K562 (cell line): ENCODE measurements at regions of chr22 and their contacts with region 1.

Region 1: DNA sequence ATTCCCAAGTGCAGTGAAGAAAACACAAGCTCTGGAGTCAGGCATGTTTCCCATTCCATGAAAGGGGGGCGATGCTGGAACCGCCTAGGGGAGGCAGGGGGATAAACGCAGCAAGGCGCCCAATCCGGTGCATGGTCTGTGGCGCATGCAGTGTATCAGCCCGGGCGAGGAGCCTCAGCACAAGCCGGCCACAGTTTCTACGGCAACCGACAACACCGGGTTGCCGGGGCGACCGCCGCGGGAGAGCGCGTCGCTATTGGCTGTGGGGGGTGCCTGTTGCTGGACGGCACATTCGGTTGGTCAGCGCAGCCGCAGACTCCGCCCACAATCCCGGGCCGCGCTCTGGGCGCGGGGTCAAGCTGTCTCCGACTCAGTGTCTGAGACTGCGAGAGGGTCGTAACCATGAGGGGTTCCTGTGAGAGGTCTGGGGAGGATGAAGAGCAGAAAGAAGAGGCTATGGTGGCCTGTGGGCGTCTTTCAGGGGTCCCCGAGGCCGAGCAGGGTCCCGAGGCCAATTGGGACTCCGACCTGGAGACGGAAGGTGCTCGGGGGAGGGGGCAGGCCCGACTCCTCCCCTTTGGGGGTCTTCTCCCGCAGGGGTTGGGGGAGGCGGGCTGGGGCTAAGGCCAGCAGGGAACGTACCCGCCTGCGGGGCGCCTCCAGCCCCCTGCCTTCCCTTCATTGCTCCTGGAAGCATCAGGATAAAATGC is at the start of gene LRRC74B:
- DNase-seq: peak; percentile 99 to 100 (median 100)
- ATAC-seq: peak; percentile 99
- H3K4me3 ChIP-seq: peak within 1 kb of the TSS; percentile 5; the same call in 1 of the 2 replicates
- H3K27ac ChIP-seq: no peak within 1 kb of the TSS
- H3K4me1 ChIP-seq: peaks cover 19 to 33% of the 10 kb centered on the region in 2 experiments
- H3K27me3 ChIP-seq: peaks cover 25 to 59% of the 10 kb centered on the region in 2 experiments; a peak in 4 of 5 replicates
- CTCF ChIP-seq: no peak
- EP300 ChIP-seq: no peak
- POLR2A ChIP-seq: no peak
- RAD21 ChIP-seq: no peak; a peak in 1 of 4 replicates
- polyA plus RNA-seq, gene LRRC74B: not detected

Region 2: DNA sequence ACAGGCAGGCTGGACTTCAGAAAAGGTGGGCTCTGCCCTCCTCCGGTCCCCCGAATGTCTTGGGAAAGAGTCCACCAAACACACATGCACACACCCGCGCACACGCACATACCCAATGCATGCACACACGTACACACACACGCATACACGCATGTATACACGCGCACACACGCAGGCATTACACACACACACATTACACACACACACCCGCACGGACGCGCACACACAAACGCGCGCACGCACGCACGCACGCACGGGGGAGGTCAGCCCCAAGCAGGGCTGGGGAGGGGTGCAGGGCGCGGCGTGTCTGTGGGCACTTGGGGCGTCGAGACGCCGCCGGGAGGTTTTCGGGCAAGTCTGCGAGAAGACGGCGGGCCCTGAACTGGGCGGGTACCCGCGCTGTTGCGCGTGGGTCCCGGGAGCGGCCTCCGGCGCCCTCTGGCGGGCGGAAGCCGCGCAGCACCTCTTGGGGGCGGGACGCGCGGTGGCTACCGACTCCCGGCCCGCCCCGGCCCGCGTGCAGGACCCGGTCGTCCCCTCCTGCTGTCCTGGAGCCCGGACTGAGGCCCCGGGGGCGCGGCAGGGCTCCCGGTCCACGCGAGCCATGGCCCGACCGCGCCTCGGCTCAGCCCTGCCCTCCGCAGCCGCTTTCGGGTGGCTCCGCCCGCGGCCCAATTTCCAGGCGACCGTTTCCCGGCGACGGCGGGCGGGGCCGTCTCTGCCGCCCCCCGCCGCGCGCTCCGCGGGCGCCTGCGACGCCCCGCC is 1327.9 kb before region 1 on chr22:
- CTCF ChIA-PET with region 1: no interaction called
- POLR2A ChIA-PET with region 1: no interaction called
- in situ Hi-C with region 1: no loop called
- intact Hi-C with region 1: no loop called
- DNase-seq: peak; percentile 98 to 99 (median 98)
- ATAC-seq: peak; percentile 69
- H3K4me3 ChIP-seq: peak overlapping the region; percentile 51
- H3K27ac ChIP-seq: peak overlapping the region; percentile 92
- H3K4me1 ChIP-seq: peaks cover 62 to 97% of the 10 kb centered on the region in 2 experiments
- H3K27me3 ChIP-seq: peaks cover 0 to 10% of the 10 kb centered on the region in 2 experiments; a peak in 2 of 5 replicates
- CTCF ChIP-seq: peak; percentile 98 to 100 (median 98)
- EP300 ChIP-seq: peak; percentile 47; the same call in 1 of the 2 replicates
- POLR2A ChIP-seq: peak; percentile 2; the same call in 1 of the 2 replicates
- RAD21 ChIP-seq: peak in 1 of 2 experiments; percentile 100; a peak in 2 of 4 replicates

Region 3: DNA sequence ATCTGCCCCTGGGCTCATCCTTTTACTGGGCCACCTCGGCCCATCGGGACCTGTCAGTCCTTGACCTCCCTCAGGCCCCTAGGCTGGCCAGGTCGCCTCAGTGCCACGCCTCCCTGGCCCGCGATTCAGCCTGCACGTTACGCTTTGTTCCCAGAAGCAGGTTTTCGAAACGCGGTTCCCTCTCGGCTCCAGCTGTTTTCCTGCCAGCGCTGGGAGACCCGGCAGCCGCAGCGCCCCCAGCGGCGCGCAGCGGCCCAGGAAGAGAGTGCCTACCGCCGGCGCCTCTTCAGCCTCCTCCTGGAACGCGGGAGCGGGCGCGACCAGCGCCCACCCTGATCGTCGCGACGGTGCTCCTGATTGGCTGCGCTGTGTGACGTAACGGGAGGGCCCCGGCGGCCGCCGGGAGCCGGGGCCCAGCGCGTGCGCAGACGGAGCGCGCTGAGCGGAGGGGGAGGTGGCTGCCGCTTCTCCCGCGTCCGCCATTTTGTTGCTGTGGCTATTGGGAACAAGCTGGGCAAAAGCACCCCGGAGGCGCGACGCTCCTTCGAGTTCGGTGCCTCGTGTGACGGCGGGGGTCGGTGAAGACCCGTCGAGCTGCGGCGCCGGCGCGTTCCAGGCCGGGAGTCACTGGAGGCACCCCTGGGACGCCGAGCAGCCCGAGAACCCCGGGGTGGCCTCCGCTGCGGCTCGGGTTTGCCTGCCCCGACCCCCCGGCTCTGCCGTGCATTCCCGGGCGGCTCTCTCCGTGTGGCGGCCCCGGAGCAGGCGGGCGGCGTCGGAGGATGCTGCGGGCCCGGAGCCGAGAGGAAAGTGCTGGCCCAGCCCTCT is 128.5 kb before region 1 on chr22 and contains the start of gene CRKL:
- CTCF ChIA-PET with region 1: no interaction called
- POLR2A ChIA-PET with region 1: no interaction called
- in situ Hi-C with region 1: no loop called
- intact Hi-C with region 1: no loop called
- DNase-seq: peak; percentile 100
- ATAC-seq: peak; percentile 93
- H3K4me3 ChIP-seq: peak within 1 kb of the TSS; percentile 67
- H3K27ac ChIP-seq: peak within 1 kb of the TSS; percentile 89
- H3K4me1 ChIP-seq: peaks cover 20 to 41% of the 10 kb centered on the region in 2 experiments
- H3K27me3 ChIP-seq: no peaks in the 10 kb centered on the region
- CTCF ChIP-seq: peak; percentile 99 to 100 (median 100)
- EP300 ChIP-seq: peak; percentile 88
- POLR2A ChIP-seq: no peak
- RAD21 ChIP-seq: no peak
- polyA plus RNA-seq, gene CRKL: 100 to 105 TPM

Region 4: DNA sequence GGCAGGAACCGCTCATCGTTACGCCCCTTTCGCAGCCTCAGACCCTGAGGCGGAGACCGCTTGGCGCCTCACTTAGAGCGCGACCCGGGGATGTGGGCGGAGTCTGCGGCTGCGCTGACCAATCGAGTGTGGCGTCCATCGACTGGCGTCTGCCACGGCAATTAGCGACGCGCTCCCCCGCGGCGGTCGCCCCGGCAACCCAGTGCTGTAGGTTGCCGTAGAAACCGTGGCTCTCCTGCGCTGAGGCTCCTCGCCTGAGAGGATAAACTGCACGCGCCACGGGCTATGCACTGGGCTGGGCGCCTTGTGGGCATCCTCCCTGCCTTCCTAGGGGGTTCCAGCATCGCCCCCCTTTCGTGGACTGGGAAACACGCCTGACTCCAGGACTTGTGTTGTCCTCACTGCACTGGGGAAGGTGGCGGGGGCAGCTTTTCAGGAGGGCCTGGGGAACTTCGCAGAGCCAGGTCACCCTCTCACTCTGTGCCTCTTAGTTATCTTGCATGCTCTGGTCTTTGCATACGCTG is 31.5 kb before region 1 on chr22:
- CTCF ChIA-PET with region 1: no interaction called
- POLR2A ChIA-PET with region 1: interaction called, 7 read pairs
- in situ Hi-C with region 1: no loop called
- intact Hi-C with region 1: loop called (anchors 5 kb)
- DNase-seq: peak; percentile 100
- ATAC-seq: peak; percentile 91
- H3K4me3 ChIP-seq: peak overlapping the region; percentile 44
- H3K27ac ChIP-seq: peak overlapping the region; percentile 67
- H3K4me1 ChIP-seq: peaks cover 26 to 46% of the 10 kb centered on the region in 2 experiments
- H3K27me3 ChIP-seq: no peaks in the 10 kb centered on the region; a peak in 1 of 5 replicates
- CTCF ChIP-seq: no peak; a peak in 1 of 6 replicates
- EP300 ChIP-seq: peak; percentile 75
- POLR2A ChIP-seq: no peak
- RAD21 ChIP-seq: no peak

Region 5: GRCh38 chr22:21020802-21021429 is 24.8 kb before region 1 on chr22:
- CTCF ChIA-PET with region 1: interaction called, 6 read pairs
- POLR2A ChIA-PET with region 1: interaction called, 120 read pairs
- in situ Hi-C with region 1: no loop called
- intact Hi-C with region 1: no loop called
- DNase-seq: peak; percentile 85 to 98 (median 96)
- ATAC-seq: peak; percentile 88
- H3K4me3 ChIP-seq: no peak overlapping the region
- H3K27ac ChIP-seq: no peak overlapping the region
- H3K4me1 ChIP-seq: peaks cover 7 to 31% of the 10 kb centered on the region in 2 experiments
- H3K27me3 ChIP-seq: peaks cover 3 to 16% of the 10 kb centered on the region in 2 experiments; a peak in 4 of 5 replicates
- CTCF ChIP-seq: peak; percentile 94 to 97 (median 97)
- EP300 ChIP-seq: no peak
- POLR2A ChIP-seq: no peak
- RAD21 ChIP-seq: peak in 1 of 2 experiments; percentile 93; a peak in 3 of 4 replicates

Region 6: GRCh38 chr22:21031971-21032867 is 13.5 kb before region 1 on chr22 and contains the start of gene SLC7A4:
- CTCF ChIA-PET with region 1: no interaction called
- POLR2A ChIA-PET with region 1: interaction called, 120 read pairs
- in situ Hi-C with region 1: no loop called
- intact Hi-C with region 1: loop called (anchors 2 kb)
- DNase-seq: peak in 2 of 4 experiments; percentile 85 to 88
- ATAC-seq: peak; percentile 26
- H3K4me3 ChIP-seq: no peak within 1 kb of the TSS
- H3K27ac ChIP-seq: no peak within 1 kb of the TSS
- H3K4me1 ChIP-seq: peaks cover under 1 to 44% of the 10 kb centered on the region in 2 experiments; a peak in 4 of 5 replicates
- H3K27me3 ChIP-seq: peaks cover 37 to 62% of the 10 kb centered on the region in 2 experiments; a peak in 4 of 5 replicates
- CTCF ChIP-seq: no peak
- EP300 ChIP-seq: no peak
- POLR2A ChIP-seq: no peak
- RAD21 ChIP-seq: no peak
- polyA plus RNA-seq, gene SLC7A4: not detected

Region 7: DNA sequence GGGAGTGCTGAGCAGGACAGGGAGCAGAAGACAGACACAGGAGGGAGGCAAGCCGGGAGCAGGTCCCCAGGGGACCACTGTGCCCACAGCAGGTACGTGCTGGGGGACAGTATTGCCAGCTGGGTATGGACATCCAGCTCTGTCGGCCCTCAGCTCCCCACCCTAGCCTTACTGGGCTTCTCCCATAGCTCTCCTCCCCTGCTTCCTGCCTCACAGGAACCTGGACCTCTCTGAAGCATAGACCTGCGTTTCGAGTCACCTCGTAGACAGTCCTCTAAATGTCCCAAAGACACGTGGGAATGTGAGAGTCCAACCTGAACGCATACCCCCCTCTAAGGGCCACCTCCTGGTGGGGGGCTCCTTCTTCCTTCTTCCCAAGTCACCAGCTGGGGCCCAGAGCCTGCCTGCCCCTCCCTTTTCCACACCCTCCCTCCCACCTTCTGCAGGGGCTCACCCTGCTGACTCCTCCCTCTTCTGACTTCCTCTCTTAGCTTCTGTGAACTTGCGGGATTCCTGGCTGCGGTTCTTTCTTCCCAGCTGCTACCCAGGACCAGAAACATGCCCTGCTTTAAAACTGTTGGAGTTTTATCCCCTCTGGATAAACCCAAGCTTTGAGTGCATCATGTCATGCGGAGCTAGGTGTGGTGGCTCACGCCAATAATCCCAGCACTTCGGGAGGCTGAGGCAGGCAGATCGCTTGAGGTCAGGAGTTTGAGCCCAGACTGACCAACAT is 10.0 kb after region 1 on chr22:
- CTCF ChIA-PET with region 1: no interaction called
- POLR2A ChIA-PET with region 1: interaction called, 54 read pairs
- in situ Hi-C with region 1: no loop called
- intact Hi-C with region 1: no loop called
- DNase-seq: peak; percentile 84 to 97 (median 92)
- ATAC-seq: peak; percentile 73
- H3K4me3 ChIP-seq: no peak overlapping the region
- H3K27ac ChIP-seq: no peak overlapping the region
- H3K4me1 ChIP-seq: peaks cover 26 to 40% of the 10 kb centered on the region in 2 experiments
- H3K27me3 ChIP-seq: peaks cover 20 to 64% of the 10 kb centered on the region in 2 experiments; a peak in 4 of 5 replicates
- CTCF ChIP-seq: no peak; a peak in 1 of 6 replicates
- EP300 ChIP-seq: no peak
- POLR2A ChIP-seq: no peak
- RAD21 ChIP-seq: no peak

Region 8: DNA sequence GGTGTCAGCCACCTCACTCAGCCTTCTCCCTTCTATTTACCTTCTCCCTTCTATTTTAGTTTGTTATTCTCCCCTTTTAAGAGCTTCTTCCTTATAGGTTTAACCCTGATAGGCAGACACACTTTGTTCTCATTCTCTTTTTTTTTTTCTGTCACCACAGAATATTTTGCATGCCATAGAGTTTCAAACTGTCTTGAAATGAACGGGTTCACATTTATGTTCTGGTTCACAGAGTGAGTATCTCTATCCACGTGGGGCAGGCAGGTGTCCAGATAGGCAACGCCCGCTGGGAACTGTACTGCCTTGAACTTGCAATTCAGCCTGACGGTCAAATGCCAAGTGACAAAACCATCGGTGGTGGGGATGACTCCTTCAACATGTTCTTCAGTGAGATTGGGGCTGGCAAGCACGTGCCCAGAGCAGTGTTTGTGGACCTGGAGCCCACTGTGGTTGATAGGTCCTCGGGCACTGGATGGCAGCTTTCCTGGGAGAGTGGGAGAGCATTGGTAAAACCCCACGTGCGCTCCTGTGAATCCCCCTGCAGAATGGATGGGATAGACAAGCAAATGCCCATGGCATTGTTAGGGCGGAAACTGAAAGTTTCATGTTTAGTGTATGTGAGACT is 19.6 kb after region 1 on chr22:
- CTCF ChIA-PET with region 1: no interaction called
- POLR2A ChIA-PET with region 1: interaction called, 12 read pairs
- in situ Hi-C with region 1: no loop called
- intact Hi-C with region 1: no loop called
- DNase-seq: peak in 1 of 4 experiments; percentile 20
- ATAC-seq: no peak
- H3K4me3 ChIP-seq: no peak overlapping the region
- H3K27ac ChIP-seq: no peak overlapping the region
- H3K4me1 ChIP-seq: no peaks in the 10 kb centered on the region
- H3K27me3 ChIP-seq: peaks cover 60 to 71% of the 10 kb centered on the region in 2 experiments
- CTCF ChIP-seq: no peak
- EP300 ChIP-seq: no peak
- POLR2A ChIP-seq: no peak
- RAD21 ChIP-seq: no peak